IMR-90 (cell line): ENCODE measurements at regions of chr2 and their contacts with region 1.

Region 1: GRCh38 chr2:235135990-235136561 is 184.3 kb downstream of the SH3BP4 start:
- DNase-seq: peak; percentile 82
- ATAC-seq: peak; percentile 96
- H3K4me3 ChIP-seq: no peak overlapping the region
- H3K27ac ChIP-seq: no peak overlapping the region
- H3K4me1 ChIP-seq: no peaks in the 10 kb centered on the region
- H3K27me3 ChIP-seq: peaks cover 36% of the 10 kb centered on the region
- CTCF ChIP-seq: peak; percentile 86
- POLR2A ChIP-seq: no peak
- RAD21 ChIP-seq: peak; percentile 88

Region 2: GRCh38 chr2:234989183-234989701 is 146.8 kb before region 1 on chr2:
- CTCF ChIA-PET with region 1: no interaction called
- POLR2A ChIA-PET with region 1: no interaction called
- dilution Hi-C with region 1: no loop called
- in situ Hi-C with region 1: no loop called
- intact Hi-C with region 1: no loop called
- DNase-seq: no peak
- ATAC-seq: no peak
- H3K4me3 ChIP-seq: no peak overlapping the region
- H3K27ac ChIP-seq: peak overlapping the region; percentile 43; the same call in 1 of the 2 replicates
- H3K4me1 ChIP-seq: peaks cover 51% of the 10 kb centered on the region
- H3K27me3 ChIP-seq: no peaks in the 10 kb centered on the region
- CTCF ChIP-seq: no peak
- POLR2A ChIP-seq: no peak
- RAD21 ChIP-seq: no peak

Region 3: GRCh38 chr2:235263205-235264122 is 127.4 kb after region 1 on chr2:
- CTCF ChIA-PET with region 1: no interaction called
- POLR2A ChIA-PET with region 1: no interaction called
- dilution Hi-C with region 1: no loop called
- in situ Hi-C with region 1: no loop called
- intact Hi-C with region 1: loop called (anchors 5 kb)
- DNase-seq: peak; percentile 93
- ATAC-seq: peak; percentile 91
- H3K4me3 ChIP-seq: no peak overlapping the region
- H3K27ac ChIP-seq: peak overlapping the region; percentile 66
- H3K4me1 ChIP-seq: peaks cover 25% of the 10 kb centered on the region
- H3K27me3 ChIP-seq: no peaks in the 10 kb centered on the region
- CTCF ChIP-seq: no peak
- POLR2A ChIP-seq: no peak
- RAD21 ChIP-seq: 0 out of 2 replicates have a peak, but pooled peaks have one; percentile 16

Region 4: DNA sequence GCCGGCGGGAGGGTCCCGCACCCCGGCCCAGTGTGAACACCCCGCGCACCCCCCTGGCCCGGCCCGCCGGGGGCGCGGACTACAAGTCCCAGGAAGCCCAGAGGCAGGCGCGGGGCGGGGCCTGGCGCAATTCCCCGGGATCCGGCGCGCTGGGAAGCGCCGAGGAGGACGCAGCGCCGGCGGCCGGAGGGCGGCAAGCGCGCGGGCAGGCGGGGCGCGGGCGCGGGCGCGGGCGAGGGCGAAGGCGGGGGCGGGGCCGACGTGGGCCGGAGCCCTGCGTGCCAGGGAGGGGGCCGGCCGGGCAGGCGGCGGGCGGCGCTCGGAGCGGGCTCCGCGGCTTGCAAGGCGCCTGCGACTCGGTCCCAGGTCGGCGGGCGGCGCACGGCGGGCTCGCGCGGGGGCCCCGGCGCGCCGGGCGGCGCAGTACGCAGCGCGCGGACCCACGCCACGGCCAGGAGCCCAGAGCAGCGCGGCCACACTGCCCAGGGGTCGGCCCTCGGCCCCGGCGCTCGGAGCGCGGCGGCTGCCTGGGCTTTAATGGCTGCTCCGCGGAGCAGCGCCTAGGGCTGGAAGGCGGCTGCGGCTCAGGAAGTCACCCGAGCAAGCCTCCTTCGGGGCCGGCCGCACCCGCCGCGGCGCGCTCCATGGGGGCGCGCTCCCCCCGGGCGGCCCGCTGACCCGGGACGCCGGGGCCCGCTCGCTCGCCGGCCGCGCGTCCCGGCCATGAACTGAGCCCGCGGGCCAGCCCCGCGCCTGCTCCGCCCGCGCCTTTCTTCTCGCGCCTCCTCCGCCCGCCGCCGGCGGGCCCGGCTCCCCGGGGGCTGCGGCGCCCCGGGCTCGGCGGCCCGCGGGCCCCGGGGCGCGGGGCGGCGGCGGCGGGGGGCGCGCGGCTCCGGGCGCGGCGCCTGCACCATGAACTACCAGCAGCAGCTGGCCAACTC is 358.0 kb after region 1 on chr2 and contains the start of gene AGAP1:
- CTCF ChIA-PET with region 1: no interaction called
- POLR2A ChIA-PET with region 1: no interaction called
- dilution Hi-C with region 1: no loop called
- in situ Hi-C with region 1: no loop called
- intact Hi-C with region 1: loop called (anchors 2 kb)
- DNase-seq: peak; percentile 80
- ATAC-seq: peak; percentile 89
- H3K4me3 ChIP-seq: peak within 1 kb of the TSS; percentile 99
- H3K27ac ChIP-seq: peak within 1 kb of the TSS; percentile 72
- H3K4me1 ChIP-seq: peaks cover 11% of the 10 kb centered on the region
- H3K27me3 ChIP-seq: 0 out of 2 replicates have a peak, but pooled peaks cover 2% of the 10 kb centered on the region
- CTCF ChIP-seq: no peak
- POLR2A ChIP-seq: no peak
- RAD21 ChIP-seq: no peak
- total RNA-seq, gene AGAP1: 11.7 and 15.1 TPM in 2 replicates

Region 5: GRCh38 chr2:235551965-235552364 is 415.9 kb after region 1 on chr2:
- CTCF ChIA-PET with region 1: no interaction called
- POLR2A ChIA-PET with region 1: no interaction called
- dilution Hi-C with region 1: no loop called
- in situ Hi-C with region 1: no loop called
- intact Hi-C with region 1: loop called (anchors 1 kb)
- DNase-seq: peak; percentile 48
- ATAC-seq: peak; percentile 79
- H3K4me3 ChIP-seq: no peak overlapping the region
- H3K27ac ChIP-seq: no peak overlapping the region
- H3K4me1 ChIP-seq: peaks cover 4% of the 10 kb centered on the region; the same call in 1 of the 2 replicates
- H3K27me3 ChIP-seq: no peaks in the 10 kb centered on the region
- CTCF ChIP-seq: peak; percentile 51
- POLR2A ChIP-seq: no peak
- RAD21 ChIP-seq: peak; percentile 53

Region 6: DNA sequence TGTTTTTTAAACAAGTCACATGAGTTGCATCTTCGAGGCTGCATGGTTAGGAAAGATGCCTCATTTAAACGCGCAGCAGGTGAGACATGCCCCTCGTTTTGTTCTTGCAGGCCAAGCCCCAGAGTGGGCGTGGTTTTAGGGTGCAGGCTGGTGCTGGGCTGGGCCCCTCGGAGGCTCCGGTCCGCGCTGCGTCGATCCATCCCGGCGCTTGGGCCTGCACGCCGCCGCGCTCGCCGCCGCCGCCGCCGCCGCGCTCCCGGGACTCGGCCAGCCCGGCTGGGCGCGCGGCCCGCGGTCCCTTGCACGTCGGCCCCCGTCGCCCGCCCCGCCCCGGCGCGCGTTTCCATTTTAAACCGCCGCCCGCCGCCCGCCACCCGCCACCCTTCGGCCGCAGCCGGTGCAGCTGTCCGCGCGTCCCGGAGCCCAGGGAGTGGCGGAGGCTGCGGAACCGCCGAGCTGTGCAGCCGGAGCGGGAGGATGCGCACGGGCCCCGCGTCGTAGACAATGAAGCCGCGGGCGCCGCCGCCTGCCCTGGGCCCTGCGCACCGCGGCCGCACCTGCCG is 533.3 kb after region 1 on chr2:
- CTCF ChIA-PET with region 1: no interaction called
- POLR2A ChIA-PET with region 1: no interaction called
- dilution Hi-C with region 1: no loop called
- in situ Hi-C with region 1: loop called (anchors 10 kb)
- intact Hi-C with region 1: loop called (anchors 2 kb)
- DNase-seq: peak; percentile 58
- ATAC-seq: peak; percentile 82
- H3K4me3 ChIP-seq: peak overlapping the region; percentile 80
- H3K27ac ChIP-seq: no peak overlapping the region
- H3K4me1 ChIP-seq: peaks cover 13% of the 10 kb centered on the region
- H3K27me3 ChIP-seq: no peaks in the 10 kb centered on the region; the same call in 1 of the 2 replicates
- CTCF ChIP-seq: no peak
- POLR2A ChIP-seq: no peak
- RAD21 ChIP-seq: no peak

Region 7: DNA sequence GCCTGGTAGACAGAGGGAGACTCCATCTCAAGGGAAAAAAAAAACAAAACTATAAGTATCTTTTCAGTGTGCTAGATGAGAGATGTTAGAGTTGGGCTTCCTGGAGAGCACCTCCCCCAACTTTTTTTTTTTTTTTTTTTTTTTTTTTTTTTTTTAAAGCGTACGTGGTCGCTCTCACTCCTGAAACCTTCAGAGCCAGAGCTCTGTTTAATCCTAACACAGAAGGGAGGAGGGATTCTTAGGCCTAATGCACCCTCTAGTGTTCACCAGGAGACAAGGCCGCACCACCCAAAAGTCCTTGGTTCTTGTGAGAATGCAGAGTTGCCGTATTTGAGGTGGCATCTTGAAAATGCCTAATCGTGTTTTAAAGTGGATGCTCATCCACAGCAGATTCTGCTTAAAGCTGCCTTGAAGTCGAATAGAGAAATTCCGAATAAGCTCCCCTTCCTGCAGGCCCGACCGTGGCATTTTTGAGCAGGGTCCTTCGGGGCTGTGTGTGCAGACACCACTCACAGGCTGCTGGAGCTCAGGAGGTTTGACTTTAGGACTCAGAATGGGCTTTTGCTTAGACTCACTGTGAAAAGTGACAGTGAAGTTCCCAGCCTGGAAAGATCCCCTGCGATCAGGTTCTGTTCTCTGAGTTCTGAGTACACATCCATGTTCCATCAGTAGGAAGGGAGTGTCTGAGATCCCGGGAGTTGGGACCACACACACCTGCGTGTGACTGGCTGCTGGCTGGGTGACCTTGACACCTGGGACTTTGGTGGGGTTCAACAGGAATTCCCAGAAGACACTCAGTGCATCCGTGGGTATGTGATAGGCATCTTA is 610.4 kb after region 1 on chr2:
- CTCF ChIA-PET with region 1: interaction called, 3 read pairs
- POLR2A ChIA-PET with region 1: no interaction called
- dilution Hi-C with region 1: loop called (anchors 25 kb)
- in situ Hi-C with region 1: loop called (anchors 5 kb)
- intact Hi-C with region 1: loop called (anchors 1 kb)
- DNase-seq: peak; percentile 90
- ATAC-seq: peak; percentile 88
- H3K4me3 ChIP-seq: no peak overlapping the region
- H3K27ac ChIP-seq: no peak overlapping the region
- H3K4me1 ChIP-seq: peaks cover 8% of the 10 kb centered on the region
- H3K27me3 ChIP-seq: no peaks in the 10 kb centered on the region
- CTCF ChIP-seq: peak; percentile 94
- POLR2A ChIP-seq: no peak
- RAD21 ChIP-seq: peak; percentile 97